ENCODE measurements at regions of chr6 and their contacts with region 1.

Region 1: GRCh38 chr6:155449450-155450239 is 6.0 kb downstream of the NOX3 start:
- DNase-seq: no peak
- ATAC-seq: no peak
- H3K4me3 ChIP-seq: no peak overlapping the region
- H3K4me3 Mint-ChIP-seq: no peak overlapping the region
- H3K27ac ChIP-seq: no peak overlapping the region
- H3K27ac Mint-ChIP-seq: no peak overlapping the region
- H3K4me1 ChIP-seq: peaks cover 0 to 2% of the 10 kb centered on the region in 2 experiments
- H3K4me1 Mint-ChIP-seq: peaks cover 5 to 7% (median 6%) of the 10 kb centered on the region in 3 donors
- H3K27me3 ChIP-seq: peaks cover 0 to 2% of the 10 kb centered on the region in 2 experiments
- H3K27me3 Mint-ChIP-seq: peaks cover 3 to 14% of the 10 kb centered on the region in 2 donors

Region 2: GRCh38 chr6:155154158-155154830 is 295.4 kb before region 1 on chr6:
- CTCF ChIA-PET with region 1: no interaction called
- POLR2A ChIA-PET with region 1: no interaction called
- DNase-seq: no peak
- ATAC-seq: peak in 1 of 4 experiments; percentile 16
- H3K4me3 ChIP-seq: no peak overlapping the region
- H3K4me3 Mint-ChIP-seq: peak overlapping the region in 1 of 3 donors; percentile 39
- H3K27ac ChIP-seq: no peak overlapping the region
- H3K27ac Mint-ChIP-seq: peak overlapping the region in 1 of 2 donors; percentile 2
- H3K4me1 ChIP-seq: peaks cover 6 to 9% of the 10 kb centered on the region in 2 experiments
- H3K4me1 Mint-ChIP-seq: peaks cover 17 to 38% (median 22%) of the 10 kb centered on the region in 3 donors
- H3K27me3 ChIP-seq: no peaks in the 10 kb centered on the region
- H3K27me3 Mint-ChIP-seq: no peaks in the 10 kb centered on the region

Region 3: GRCh38 chr6:155418017-155418761 is 31.5 kb before region 1 on chr6:
- CTCF ChIA-PET with region 1: no interaction called
- POLR2A ChIA-PET with region 1: interaction called in 1 of 2 experiments, 10 read pairs
- DNase-seq: peak; percentile 7 to 82 (median 63)
- ATAC-seq: peak; percentile 72 to 93 (median 78)
- H3K4me3 ChIP-seq: peak overlapping the region; percentile 20 to 58
- H3K4me3 Mint-ChIP-seq: peak overlapping the region; percentile 71 to 78 (median 75)
- H3K27ac ChIP-seq: peak overlapping the region; percentile 83
- H3K27ac Mint-ChIP-seq: peak overlapping the region; percentile 97 to 98
- H3K4me1 ChIP-seq: peaks cover 15 to 18% of the 10 kb centered on the region in 2 experiments
- H3K4me1 Mint-ChIP-seq: peaks cover 35 to 40% (median 35%) of the 10 kb centered on the region in 3 donors
- H3K27me3 ChIP-seq: no peaks in the 10 kb centered on the region
- H3K27me3 Mint-ChIP-seq: no peaks in the 10 kb centered on the region